ENCODE measurements at regions of chr6 and their contacts with region 1.

Region 1: DNA sequence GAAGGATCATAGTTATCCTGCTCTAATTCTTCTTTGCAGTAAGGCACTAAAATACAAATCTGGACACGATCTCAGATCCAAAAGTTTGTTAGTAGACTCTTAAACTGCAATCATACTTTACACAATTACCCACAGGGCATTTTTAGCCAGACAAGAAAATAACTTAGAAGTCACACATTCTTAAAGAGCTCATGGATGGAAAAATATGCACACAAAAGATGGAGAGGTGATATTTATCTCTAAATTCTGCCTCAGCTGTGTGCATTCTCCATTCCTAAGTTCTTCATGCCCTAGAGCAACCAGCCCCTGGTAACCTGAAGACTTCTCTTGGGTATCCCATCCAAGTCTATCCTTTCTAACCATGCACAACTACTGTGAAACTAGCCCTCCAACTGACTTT is 171.1 kb downstream of the ASCC3 start:
- DNase-seq: no peak
- H3K4me3 ChIP-seq: no peak overlapping the region
- H3K27me3 ChIP-seq: no peaks in the 10 kb centered on the region
- CTCF ChIP-seq: no peak

Region 2: GRCh38 chr6:100695445-100695844 is 14.6 kb before region 1 on chr6:
- CTCF ChIA-PET with region 1: no interaction called
- POLR2A ChIA-PET with region 1: no interaction called
- DNase-seq: no peak
- H3K4me3 ChIP-seq: no peak overlapping the region
- H3K27me3 ChIP-seq: no peaks in the 10 kb centered on the region
- CTCF ChIP-seq: no peak

Region 3: GRCh38 chr6:100719883-100720682 is 10.0 kb after region 1 on chr6:
- CTCF ChIA-PET with region 1: interaction called, 10 read pairs
- POLR2A ChIA-PET with region 1: no interaction called
- DNase-seq: no peak
- H3K4me3 ChIP-seq: no peak overlapping the region
- H3K27me3 ChIP-seq: no peaks in the 10 kb centered on the region
- CTCF ChIP-seq: peak; percentile 51

Region 4: GRCh38 chr6:100730001-100730980 is 20.2 kb after region 1 on chr6:
- CTCF ChIA-PET with region 1: no interaction called
- POLR2A ChIA-PET with region 1: no interaction called
- DNase-seq: no peak
- H3K4me3 ChIP-seq: no peak overlapping the region
- H3K27me3 ChIP-seq: no peaks in the 10 kb centered on the region
- CTCF ChIP-seq: no peak